ENCODE measurements at regions of chr5 and their contacts with region 1.

Region 1: DNA sequence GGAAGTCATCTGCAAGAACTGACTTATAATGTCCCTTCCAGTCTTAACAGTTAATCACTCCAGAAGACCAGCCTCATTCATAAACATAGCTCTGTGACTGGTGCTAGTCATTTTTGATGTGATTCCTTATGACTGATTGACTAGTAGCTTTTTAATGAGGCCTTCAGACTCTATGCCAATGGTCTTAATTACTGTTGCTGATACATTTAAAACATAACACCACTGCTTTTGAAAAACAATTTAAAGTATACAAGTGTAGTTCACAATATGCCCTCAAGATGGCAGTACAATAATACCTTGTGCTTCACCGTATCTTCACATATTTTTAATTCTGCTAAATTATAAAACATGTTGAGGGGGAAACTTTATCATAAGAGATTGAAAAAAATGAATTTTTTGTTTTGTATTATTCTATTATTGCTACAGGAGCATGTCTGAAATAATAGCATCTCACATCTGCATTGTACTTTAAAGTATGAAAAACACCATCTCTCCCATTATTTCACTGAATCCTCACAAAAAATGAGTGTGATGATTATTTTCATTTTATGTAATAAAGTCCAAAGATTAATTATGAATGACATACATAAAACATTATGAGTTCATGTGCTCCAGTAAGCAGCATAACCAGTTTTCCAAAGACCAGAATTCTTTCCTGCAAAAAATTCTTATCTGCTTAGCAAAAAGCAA is 55.2 kb upstream of the SHISAL2B start:
- DNase-seq: peak; percentile 83
- H3K4me3 ChIP-seq: no peak overlapping the region
- H3K27ac ChIP-seq: no peak overlapping the region
- H3K4me1 ChIP-seq: peaks cover 7% of the 10 kb centered on the region
- H3K27me3 ChIP-seq: no peaks in the 10 kb centered on the region
- CTCF ChIP-seq: peak; percentile 84

Region 2: DNA sequence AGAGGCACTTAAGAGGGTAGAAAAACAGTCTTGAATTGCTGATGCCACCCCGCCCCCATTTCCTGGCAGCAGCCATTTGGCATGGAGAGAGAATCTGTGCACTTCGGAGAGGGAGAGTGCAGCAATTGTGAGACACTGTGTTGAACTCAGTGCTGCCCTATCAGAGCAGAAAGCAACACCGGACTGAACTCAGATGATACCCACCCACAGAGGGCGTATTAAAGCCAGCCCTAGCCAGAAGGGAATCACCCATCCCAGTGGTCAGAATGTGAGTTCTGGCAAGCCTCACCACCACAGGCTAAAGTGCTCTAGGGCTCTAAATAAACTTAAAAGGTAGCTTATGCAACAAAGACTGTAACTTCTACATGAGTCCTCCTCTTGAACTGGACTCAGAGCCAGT is 217.8 kb before region 1 on chr5:
- CTCF ChIA-PET with region 1: no interaction called
- POLR2A ChIA-PET with region 1: no interaction called
- intact Hi-C with region 1: no loop called
- DNase-seq: peak; percentile 1
- H3K4me3 ChIP-seq: no peak overlapping the region
- H3K27ac ChIP-seq: no peak overlapping the region
- H3K4me1 ChIP-seq: no peaks in the 10 kb centered on the region
- H3K27me3 ChIP-seq: no peaks in the 10 kb centered on the region
- CTCF ChIP-seq: no peak

Region 3: DNA sequence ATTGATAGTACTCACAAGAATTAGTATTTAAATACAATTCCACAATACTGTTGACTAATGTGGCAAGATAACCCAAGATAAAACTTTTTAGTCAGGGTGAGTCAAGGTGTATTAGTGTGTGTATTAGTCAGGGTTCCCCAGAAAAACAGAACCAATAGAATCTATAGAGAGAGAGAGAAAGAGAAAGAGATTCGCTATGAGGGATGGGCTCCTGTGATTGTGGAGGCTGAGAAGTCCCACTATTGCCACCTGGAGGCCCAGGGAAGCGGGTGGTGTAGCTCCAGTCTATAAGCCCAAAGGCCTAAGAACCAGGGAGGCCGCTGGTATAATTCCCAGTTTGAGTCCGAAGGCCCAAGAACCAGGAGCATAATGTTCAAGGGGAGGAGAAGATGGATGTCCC is 45.1 kb after region 1 on chr5:
- CTCF ChIA-PET with region 1: no interaction called
- POLR2A ChIA-PET with region 1: no interaction called
- intact Hi-C with region 1: loop called (anchors 5 kb)
- DNase-seq: peak; percentile 40
- H3K4me3 ChIP-seq: no peak overlapping the region
- H3K27ac ChIP-seq: no peak overlapping the region
- H3K4me1 ChIP-seq: no peaks in the 10 kb centered on the region
- H3K27me3 ChIP-seq: no peaks in the 10 kb centered on the region
- CTCF ChIP-seq: peak; percentile 46